ENCODE measurements at regions of chr2 and their contacts with region 1.

Region 1: GRCh38 chr2:63861220-63861822 is 19.6 kb downstream of the UGP2 start:
- DNase-seq: peak; percentile 73
- ATAC-seq: peak; percentile 39
- H3K4me3 Mint-ChIP-seq: no peak overlapping the region
- H3K27ac Mint-ChIP-seq: no peak overlapping the region
- H3K4me1 Mint-ChIP-seq: peaks cover 43% of the 10 kb centered on the region
- H3K27me3 Mint-ChIP-seq: no peaks in the 10 kb centered on the region

Region 2: GRCh38 chr2:63300835-63301234 is 560.5 kb before region 1 on chr2:
- CTCF ChIA-PET with region 1: no interaction called
- POLR2A ChIA-PET with region 1: no interaction called
- intact Hi-C with region 1: no loop called
- DNase-seq: peak; percentile 20
- ATAC-seq: no peak
- H3K4me3 Mint-ChIP-seq: no peak overlapping the region
- H3K27ac Mint-ChIP-seq: no peak overlapping the region
- H3K4me1 Mint-ChIP-seq: no peaks in the 10 kb centered on the region
- H3K27me3 Mint-ChIP-seq: no peaks in the 10 kb centered on the region

Region 3: DNA sequence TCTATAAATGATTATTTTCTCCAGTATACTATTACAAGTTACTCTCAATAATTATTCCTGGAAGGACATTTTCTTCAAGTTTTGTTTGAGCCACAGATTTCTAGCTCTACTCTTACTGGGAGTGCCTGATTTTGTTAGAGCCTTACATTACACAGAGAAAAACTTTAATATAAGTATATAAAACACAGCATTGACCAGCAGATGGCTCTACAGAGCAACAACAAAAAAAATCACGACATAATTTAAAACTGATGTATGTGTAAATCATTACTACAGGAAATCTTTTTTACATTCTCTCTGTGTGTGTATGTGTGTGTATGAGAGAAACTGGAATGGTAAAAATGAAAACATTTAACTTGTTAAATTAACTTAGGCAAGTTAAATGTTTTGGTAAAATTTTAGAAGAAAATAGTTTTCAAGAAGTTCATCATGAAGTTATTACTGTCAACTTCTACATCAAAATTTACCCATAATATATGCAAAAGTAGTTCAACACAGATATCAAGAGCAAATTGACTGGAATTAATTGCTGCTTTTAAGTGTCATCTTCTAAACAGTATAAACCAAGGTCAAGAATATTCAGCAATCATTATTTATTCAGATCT is 169.2 kb before region 1 on chr2:
- CTCF ChIA-PET with region 1: interaction called, 42 read pairs
- POLR2A ChIA-PET with region 1: no interaction called
- intact Hi-C with region 1: loop called (anchors 1 kb)
- DNase-seq: peak; percentile 14
- ATAC-seq: no peak
- H3K4me3 Mint-ChIP-seq: no peak overlapping the region
- H3K27ac Mint-ChIP-seq: no peak overlapping the region
- H3K4me1 Mint-ChIP-seq: no peaks in the 10 kb centered on the region
- H3K27me3 Mint-ChIP-seq: no peaks in the 10 kb centered on the region

Region 4: GRCh38 chr2:63698825-63699548 is 162.3 kb before region 1 on chr2:
- CTCF ChIA-PET with region 1: interaction called, 42 read pairs
- POLR2A ChIA-PET with region 1: no interaction called
- intact Hi-C with region 1: no loop called
- DNase-seq: no peak
- ATAC-seq: peak; percentile 84
- H3K4me3 Mint-ChIP-seq: no peak overlapping the region
- H3K27ac Mint-ChIP-seq: no peak overlapping the region
- H3K4me1 Mint-ChIP-seq: no peaks in the 10 kb centered on the region
- H3K27me3 Mint-ChIP-seq: no peaks in the 10 kb centered on the region

Region 5: GRCh38 chr2:63819765-63820717 is 41.3 kb before region 1 on chr2:
- CTCF ChIA-PET with region 1: interaction called, 11 read pairs
- POLR2A ChIA-PET with region 1: no interaction called
- intact Hi-C with region 1: no loop called
- DNase-seq: no peak
- ATAC-seq: no peak
- H3K4me3 Mint-ChIP-seq: no peak overlapping the region
- H3K27ac Mint-ChIP-seq: no peak overlapping the region
- H3K4me1 Mint-ChIP-seq: no peaks in the 10 kb centered on the region
- H3K27me3 Mint-ChIP-seq: peaks cover 2% of the 10 kb centered on the region

Region 6: GRCh38 chr2:63888490-63889402 is 27.4 kb after region 1 on chr2:
- CTCF ChIA-PET with region 1: interaction called, 6 read pairs
- POLR2A ChIA-PET with region 1: no interaction called
- intact Hi-C with region 1: loop called in 1 of 2 experiments (anchors 2 kb)
- DNase-seq: peak; percentile 67
- ATAC-seq: peak; percentile 89
- H3K4me3 Mint-ChIP-seq: no peak overlapping the region
- H3K27ac Mint-ChIP-seq: peak overlapping the region; percentile 60
- H3K4me1 Mint-ChIP-seq: peaks cover 10% of the 10 kb centered on the region
- H3K27me3 Mint-ChIP-seq: no peaks in the 10 kb centered on the region

Region 7: DNA sequence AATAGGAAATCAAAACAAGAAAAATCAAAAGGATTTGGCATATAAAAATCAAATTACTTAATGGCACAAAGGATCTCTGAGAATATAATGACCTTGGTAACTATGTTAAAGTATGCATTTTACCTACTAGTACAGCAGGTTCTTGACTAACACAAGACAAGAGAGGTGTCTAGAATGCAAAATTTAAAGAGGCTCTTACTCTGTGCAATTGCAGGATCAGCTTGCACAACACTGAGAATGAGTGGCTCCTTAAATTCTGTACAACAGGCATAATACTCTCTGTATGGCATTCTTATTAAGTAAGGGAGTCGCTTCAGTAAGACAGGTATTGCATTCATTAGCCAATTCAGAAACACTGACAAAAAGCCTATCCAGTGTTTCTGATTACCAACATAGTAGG is 53.0 kb after region 1 on chr2:
- CTCF ChIA-PET with region 1: no interaction called
- POLR2A ChIA-PET with region 1: no interaction called
- intact Hi-C with region 1: no loop called
- DNase-seq: no peak
- ATAC-seq: no peak
- H3K4me3 Mint-ChIP-seq: no peak overlapping the region
- H3K27ac Mint-ChIP-seq: no peak overlapping the region
- H3K4me1 Mint-ChIP-seq: no peaks in the 10 kb centered on the region
- H3K27me3 Mint-ChIP-seq: no peaks in the 10 kb centered on the region